ENCODE measurements at regions of chr17 and their contacts with region 1.

Region 1: GRCh38 chr17:48618256-48618897 is 3.3 kb upstream of the HOXB8 start:
- DNase-seq: peak; percentile 95
- H3K4me3 Mint-ChIP-seq: peak overlapping the region; percentile 4
- H3K27ac Mint-ChIP-seq: peak overlapping the region; percentile 48
- H3K4me1 Mint-ChIP-seq: peaks cover 30% of the 10 kb centered on the region
- H3K27me3 Mint-ChIP-seq: peaks cover 90% of the 10 kb centered on the region

Region 2: DNA sequence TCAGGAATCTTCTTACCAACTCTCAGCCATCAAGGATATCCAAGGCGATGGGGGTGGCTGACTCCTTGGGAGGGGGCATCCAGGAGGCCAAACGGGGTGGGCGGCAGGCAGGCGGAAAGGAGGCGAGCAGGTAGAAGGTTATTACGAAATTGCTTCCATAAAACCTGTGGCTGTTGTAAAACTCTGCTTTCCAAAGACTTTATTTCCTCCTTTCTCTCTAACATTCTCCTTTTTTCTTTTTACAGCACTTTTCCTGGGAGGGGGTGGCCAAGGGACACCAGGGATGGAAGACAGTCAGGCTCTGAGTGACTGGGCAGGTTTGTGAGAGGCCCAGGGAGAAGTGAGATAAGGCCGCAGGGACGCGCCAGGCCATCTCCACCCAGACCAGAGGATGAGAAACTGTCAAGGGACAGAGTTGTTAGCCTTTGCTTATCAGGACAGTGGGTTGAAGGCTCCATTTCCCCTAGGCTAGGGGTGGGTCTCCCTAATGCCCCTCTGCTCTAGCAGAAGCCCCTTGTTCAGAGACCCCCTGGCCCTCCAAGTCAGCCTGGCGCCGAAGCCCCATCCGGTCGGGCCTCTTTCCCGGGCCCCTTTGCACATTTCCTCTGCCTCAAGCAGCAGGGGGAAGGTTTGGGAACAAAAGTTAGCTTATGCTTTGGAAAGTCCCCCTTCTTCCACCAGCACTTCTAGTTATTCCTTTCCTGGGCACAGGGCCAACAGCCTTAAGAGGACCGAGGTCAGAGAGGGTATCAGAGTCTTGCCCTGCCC is 12.7 kb after region 1 on chr17:
- intact Hi-C with region 1: no loop called
- DNase-seq: no peak
- H3K4me3 Mint-ChIP-seq: no peak overlapping the region
- H3K27ac Mint-ChIP-seq: no peak overlapping the region
- H3K4me1 Mint-ChIP-seq: peaks cover 8% of the 10 kb centered on the region
- H3K27me3 Mint-ChIP-seq: peaks cover 89% of the 10 kb centered on the region

Region 3: GRCh38 chr17:48642439-48643263 is 24.3 kb after region 1 on chr17:
- intact Hi-C with region 1: loop called (anchors 2 kb)
- DNase-seq: peak; percentile 57
- H3K4me3 Mint-ChIP-seq: no peak overlapping the region
- H3K27ac Mint-ChIP-seq: no peak overlapping the region
- H3K4me1 Mint-ChIP-seq: peaks cover 17% of the 10 kb centered on the region
- H3K27me3 Mint-ChIP-seq: peaks cover 91% of the 10 kb centered on the region

Region 4: DNA sequence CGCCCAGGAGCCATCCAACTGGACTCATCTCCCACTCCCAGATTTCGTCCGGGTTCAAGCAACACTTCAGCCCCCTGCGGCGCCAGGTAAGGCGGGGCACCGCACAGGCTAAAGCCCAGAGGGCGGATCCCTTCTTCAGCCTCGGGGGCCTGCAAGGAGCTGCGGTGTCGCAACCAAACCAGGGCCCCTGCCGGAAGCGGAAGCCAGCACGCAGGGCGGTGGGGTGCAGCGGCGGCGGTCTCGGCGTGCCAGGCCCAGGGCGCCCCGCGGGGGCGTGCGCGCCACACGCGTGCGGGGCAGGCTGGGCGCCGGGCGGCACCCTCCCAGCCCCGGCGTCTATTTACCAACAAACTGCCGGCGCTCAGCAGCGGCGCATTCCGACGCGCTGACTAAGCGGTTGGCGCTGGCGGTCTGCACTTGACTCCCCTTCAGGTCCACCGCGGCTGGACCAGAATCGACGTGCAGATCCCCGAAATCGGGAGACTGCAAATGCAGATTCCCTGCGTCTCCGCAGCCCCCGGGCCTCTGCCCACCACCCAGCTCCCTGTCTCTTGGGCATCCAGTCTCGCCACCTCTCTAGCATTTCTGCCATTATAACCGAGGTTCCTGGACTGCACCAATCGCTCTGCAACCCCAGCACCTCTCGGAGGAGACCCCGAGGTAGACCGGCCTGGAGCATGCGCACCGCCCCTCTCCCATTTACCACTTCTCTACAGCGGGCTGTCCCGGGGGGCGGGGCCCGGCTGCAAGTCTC is 1350.2 kb after region 1 on chr17:
- intact Hi-C with region 1: loop called (anchors 10 kb)
- DNase-seq: peak; percentile 89
- H3K4me3 Mint-ChIP-seq: peak overlapping the region; percentile 87
- H3K27ac Mint-ChIP-seq: peak overlapping the region; percentile 56
- H3K4me1 Mint-ChIP-seq: peaks cover 30% of the 10 kb centered on the region
- H3K27me3 Mint-ChIP-seq: peaks cover 90% of the 10 kb centered on the region

Measured in activated CD4-positive, alpha-beta T cell treated with anti-CD3 and anti-CD28 coated beads, Interleukin-2, amount 10 ng/mL, durations not matched to agents 24 days and 14 days (primary cell).